ENCODE measurements at regions of chr11 and their contacts with region 1.

Region 1: GRCh38 chr11:11022125-11022730 is 164.4 kb upstream of the ZBED5 start:
- DNase-seq: peak; percentile 38
- H3K4me3 ChIP-seq: no peak overlapping the region
- H3K27ac ChIP-seq: no peak overlapping the region
- H3K4me1 ChIP-seq: no peaks in the 10 kb centered on the region
- CTCF ChIP-seq: peak; percentile 78

Region 2: GRCh38 chr11:10913075-10913474 is 109.2 kb before region 1 on chr11:
- CTCF ChIA-PET with region 1: no interaction called
- POLR2A ChIA-PET with region 1: no interaction called
- intact Hi-C with region 1: no loop called
- DNase-seq: no peak
- H3K4me3 ChIP-seq: no peak overlapping the region
- H3K27ac ChIP-seq: no peak overlapping the region
- H3K4me1 ChIP-seq: no peaks in the 10 kb centered on the region
- CTCF ChIP-seq: no peak

Region 3: GRCh38 chr11:10933455-10934292 is 88.6 kb before region 1 on chr11:
- CTCF ChIA-PET with region 1: interaction called, 6 read pairs
- POLR2A ChIA-PET with region 1: no interaction called
- intact Hi-C with region 1: loop called (anchors 1 kb)
- DNase-seq: peak; percentile 80
- H3K4me3 ChIP-seq: peak overlapping the region; percentile 49
- H3K27ac ChIP-seq: no peak overlapping the region
- H3K4me1 ChIP-seq: peaks cover 6% of the 10 kb centered on the region
- CTCF ChIP-seq: peak; percentile 98

Region 4: DNA sequence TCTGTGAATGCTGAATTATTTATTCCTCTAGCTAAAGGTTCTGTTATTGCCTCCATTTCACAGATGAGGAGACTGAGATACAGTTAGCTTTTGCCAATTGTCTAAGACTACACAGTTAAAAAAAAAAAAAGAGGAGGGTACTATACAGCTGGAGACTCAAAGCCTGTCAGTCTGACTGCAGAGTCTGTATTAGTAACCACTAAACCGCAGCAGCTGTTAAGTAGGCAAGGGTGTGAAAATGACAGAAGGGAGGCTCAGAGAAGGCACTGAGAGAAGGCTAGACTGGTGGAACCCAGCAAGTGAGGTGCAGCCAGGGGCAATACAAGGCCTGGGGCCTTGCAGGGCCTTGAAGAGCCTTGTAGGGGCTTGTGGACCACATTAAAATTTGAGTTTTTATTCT is 149.6 kb after region 1 on chr11:
- CTCF ChIA-PET with region 1: no interaction called
- POLR2A ChIA-PET with region 1: no interaction called
- intact Hi-C with region 1: no loop called
- DNase-seq: peak; percentile 56
- H3K4me3 ChIP-seq: no peak overlapping the region
- H3K27ac ChIP-seq: peak overlapping the region; percentile 16
- H3K4me1 ChIP-seq: peaks cover 15% of the 10 kb centered on the region
- CTCF ChIP-seq: no peak

Region 5: DNA sequence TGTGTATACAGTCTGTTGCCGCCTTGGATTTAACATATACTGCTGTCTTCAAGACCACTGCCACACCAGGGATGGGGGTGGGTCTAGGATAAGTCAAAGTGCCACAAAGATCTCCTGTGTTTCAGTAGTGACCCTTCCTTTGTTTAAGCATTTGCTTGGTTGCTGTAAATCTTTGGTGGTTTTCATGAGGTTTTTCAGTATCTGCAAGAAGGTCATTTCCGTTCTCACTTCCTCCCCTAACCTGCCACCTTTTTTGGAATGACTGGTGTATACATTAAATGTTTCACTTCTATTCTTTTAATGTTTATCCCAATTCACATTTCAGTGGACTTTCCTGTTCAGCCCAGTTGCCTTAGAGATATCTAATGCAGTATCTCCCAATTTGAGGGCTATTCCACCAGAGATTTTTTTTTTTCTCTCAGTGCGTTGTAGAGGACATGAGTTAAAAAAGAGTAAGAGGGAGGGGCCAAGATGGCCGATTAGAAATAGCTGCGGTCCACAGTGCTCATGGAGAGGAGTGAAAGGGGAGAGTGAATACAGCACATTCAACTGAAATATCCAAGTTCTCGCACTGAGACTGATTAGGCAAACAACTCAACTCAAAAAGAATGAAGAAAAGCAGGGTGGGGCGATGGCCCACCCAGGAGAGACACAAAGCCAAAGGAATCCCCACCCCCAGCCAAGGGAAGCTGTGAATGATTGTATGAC is 862.7 kb after region 1 on chr11:
- CTCF ChIA-PET with region 1: no interaction called
- POLR2A ChIA-PET with region 1: no interaction called
- intact Hi-C with region 1: no loop called
- DNase-seq: peak; percentile 23
- H3K4me3 ChIP-seq: no peak overlapping the region
- H3K27ac ChIP-seq: no peak overlapping the region
- H3K4me1 ChIP-seq: peaks cover 12% of the 10 kb centered on the region
- CTCF ChIP-seq: no peak

Measured in OCI-LY7 (cell line).